ENCODE measurements at regions of chr18 and their contacts with region 1.

Region 1: DNA sequence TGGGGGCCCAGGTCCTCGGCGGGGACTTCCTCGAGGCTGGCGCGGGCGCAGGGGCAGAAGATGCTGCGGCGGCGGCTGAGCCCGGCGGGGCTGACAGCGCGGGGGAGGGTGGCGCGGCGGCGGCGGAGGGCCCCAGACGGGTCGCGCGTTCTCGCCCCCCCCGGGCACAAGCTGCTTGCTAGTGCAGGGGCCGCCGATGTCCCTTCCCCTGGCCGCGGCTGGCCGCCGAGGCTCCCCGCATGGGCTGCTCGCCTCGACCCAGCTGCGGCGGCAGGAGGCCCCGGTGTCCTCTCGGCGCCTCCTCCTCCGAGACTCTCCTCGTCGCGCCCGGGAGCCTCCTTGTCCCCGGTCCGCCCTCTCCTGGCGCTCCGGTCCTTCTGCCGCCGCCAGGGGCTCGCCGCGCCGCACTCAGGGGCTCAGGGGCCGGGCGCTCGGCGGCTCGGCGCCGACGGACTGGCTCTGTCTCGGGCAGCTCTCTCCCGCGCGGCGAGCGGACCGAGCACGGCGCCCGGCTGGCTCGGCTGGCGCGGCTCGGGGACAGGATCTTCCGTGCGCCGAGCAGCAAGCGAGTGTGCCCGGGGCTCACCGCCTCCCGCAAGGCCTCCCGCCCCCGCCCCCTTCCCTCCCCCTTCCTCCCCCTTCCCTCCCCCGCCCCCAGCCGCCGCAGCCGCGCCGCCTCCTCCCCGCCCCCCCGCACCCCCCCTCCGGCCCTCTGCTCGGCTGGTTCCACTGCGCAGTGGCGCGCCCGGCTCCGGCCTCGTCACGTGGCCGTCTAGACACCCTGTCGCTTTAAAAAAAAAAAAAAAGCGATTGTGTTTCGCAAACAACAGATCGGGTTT is 902 bp upstream of the SMAD7 start:
- DNase-seq: peak; percentile 59 to 79 (median 67)
- ATAC-seq: peak; percentile 69
- H3K4me3 ChIP-seq: peak overlapping the region; percentile 69
- H3K4me3 Mint-ChIP-seq: peak overlapping the region; percentile 84 to 97 (median 94)
- H3K27ac ChIP-seq: peak overlapping the region; percentile 76
- H3K27ac Mint-ChIP-seq: peak overlapping the region; percentile 87 to 99 (median 96)
- H3K4me1 ChIP-seq: peaks cover 26 to 38% of the 10 kb centered on the region in 2 donors
- H3K4me1 Mint-ChIP-seq: peaks cover 24 to 55% (median 44%) of the 10 kb centered on the region in 7 donors
- H3K27me3 ChIP-seq: no peaks in the 10 kb centered on the region
- H3K27me3 Mint-ChIP-seq: peaks cover 0 to 11% (median 0%) of the 10 kb centered on the region in 5 donors

Region 2: GRCh38 chr18:48777026-48777743 is 174.5 kb before region 1 on chr18:
- CTCF ChIA-PET with region 1: interaction called, 3 read pairs
- POLR2A ChIA-PET with region 1: no interaction called
- intact Hi-C with region 1: loop called (anchors 1 to 2 kb)
- DNase-seq: peak; percentile 40 to 78 (median 67)
- ATAC-seq: peak; percentile 86
- H3K4me3 ChIP-seq: no peak overlapping the region
- H3K4me3 Mint-ChIP-seq: no peak overlapping the region
- H3K27ac ChIP-seq: no peak overlapping the region
- H3K27ac Mint-ChIP-seq: peak overlapping the region in 1 of 9 donors; percentile 13
- H3K4me1 ChIP-seq: peaks cover 4 to 8% of the 10 kb centered on the region in 2 donors
- H3K4me1 Mint-ChIP-seq: peaks cover 0 to 10% (median 5%) of the 10 kb centered on the region in 7 donors
- H3K27me3 ChIP-seq: no peaks in the 10 kb centered on the region
- H3K27me3 Mint-ChIP-seq: peaks cover 0 to 5% (median 0%) of the 10 kb centered on the region in 5 donors

Region 3: DNA sequence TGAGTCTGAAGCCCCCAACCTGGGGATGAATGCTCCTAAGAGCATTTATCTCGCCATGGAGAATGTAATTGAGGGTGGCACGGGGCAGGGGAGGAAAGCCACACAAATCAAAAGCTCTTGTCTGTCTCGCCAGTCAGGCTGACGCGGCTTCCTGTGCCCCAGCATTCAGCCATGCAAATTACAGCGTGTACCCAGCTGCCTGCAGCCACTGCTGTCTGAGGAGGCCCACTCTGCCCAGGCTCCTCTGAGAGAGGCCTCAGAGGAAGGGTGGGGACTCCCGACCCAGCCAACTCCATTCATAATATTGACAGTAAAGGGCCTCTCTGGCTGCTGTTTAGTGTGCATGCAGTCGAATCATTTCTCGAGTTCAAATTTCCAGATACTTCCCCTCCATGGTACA is 22.9 kb before region 1 on chr18:
- CTCF ChIA-PET with region 1: no interaction called
- POLR2A ChIA-PET with region 1: interaction called, 9 read pairs
- intact Hi-C with region 1: loop called (anchors 1 to 2 kb)
- DNase-seq: peak; percentile 46 to 76 (median 64)
- ATAC-seq: peak; percentile 87
- H3K4me3 ChIP-seq: peak overlapping the region; percentile 12
- H3K4me3 Mint-ChIP-seq: peak overlapping the region; percentile 72 to 86 (median 79)
- H3K27ac ChIP-seq: no peak overlapping the region
- H3K27ac Mint-ChIP-seq: peak overlapping the region; percentile 50 to 98 (median 74)
- H3K4me1 ChIP-seq: peaks cover 62 to 73% of the 10 kb centered on the region in 2 donors
- H3K4me1 Mint-ChIP-seq: peaks cover 78 to 98% (median 96%) of the 10 kb centered on the region in 7 donors
- H3K27me3 ChIP-seq: no peaks in the 10 kb centered on the region
- H3K27me3 Mint-ChIP-seq: no peaks in the 10 kb centered on the region

Region 4: GRCh38 chr18:48962994-48963561 is 11.4 kb after region 1 on chr18:
- CTCF ChIA-PET with region 1: no interaction called
- POLR2A ChIA-PET with region 1: interaction called, 10 read pairs
- intact Hi-C with region 1: no loop called
- DNase-seq: no peak
- ATAC-seq: peak; percentile 73
- H3K4me3 ChIP-seq: no peak overlapping the region
- H3K4me3 Mint-ChIP-seq: no peak overlapping the region
- H3K27ac ChIP-seq: no peak overlapping the region
- H3K27ac Mint-ChIP-seq: peak overlapping the region in 1 of 9 donors; percentile 63
- H3K4me1 ChIP-seq: no peaks in the 10 kb centered on the region
- H3K4me1 Mint-ChIP-seq: peaks cover 0 to 15% (median 10%) of the 10 kb centered on the region in 7 donors
- H3K27me3 ChIP-seq: no peaks in the 10 kb centered on the region
- H3K27me3 Mint-ChIP-seq: peaks cover 0 to 50% (median 0%) of the 10 kb centered on the region in 5 donors

Region 5: GRCh38 chr18:49031511-49032188 is 80.0 kb after region 1 on chr18:
- CTCF ChIA-PET with region 1: no interaction called
- POLR2A ChIA-PET with region 1: no interaction called
- intact Hi-C with region 1: loop called in 1 of 2 experiments (anchors 2 kb)
- DNase-seq: peak in 8 of 9 donors; percentile 25 to 58 (median 35)
- ATAC-seq: peak; percentile 80
- H3K4me3 ChIP-seq: peak overlapping the region; percentile 24
- H3K4me3 Mint-ChIP-seq: peak overlapping the region; percentile 21 to 75 (median 58)
- H3K27ac ChIP-seq: no peak overlapping the region
- H3K27ac Mint-ChIP-seq: peak overlapping the region in 5 of 9 donors; percentile 14 to 82 (median 63)
- H3K4me1 ChIP-seq: peaks cover 0 to 9% of the 10 kb centered on the region in 2 donors
- H3K4me1 Mint-ChIP-seq: peaks cover 11 to 29% (median 17%) of the 10 kb centered on the region in 7 donors
- H3K27me3 ChIP-seq: no peaks in the 10 kb centered on the region
- H3K27me3 Mint-ChIP-seq: peaks cover 0 to 4% (median 0%) of the 10 kb centered on the region in 5 donors

Region 6: GRCh38 chr18:49486953-49487710 is 535.5 kb after region 1 on chr18 and contains the start of gene C18orf32:
- CTCF ChIA-PET with region 1: no interaction called
- POLR2A ChIA-PET with region 1: no interaction called
- intact Hi-C with region 1: loop called (anchors 2 to 5 kb)
- DNase-seq: peak; percentile 84 to 93 (median 92)
- ATAC-seq: peak; percentile 94
- H3K4me3 ChIP-seq: peak within 1 kb of the TSS; percentile 95
- H3K4me3 Mint-ChIP-seq: peak within 1 kb of the TSS; percentile 77 to 98 (median 94)
- H3K27ac ChIP-seq: peak within 1 kb of the TSS; percentile 95
- H3K27ac Mint-ChIP-seq: peak within 1 kb of the TSS; percentile 90 to 98 (median 96)
- H3K4me1 ChIP-seq: peaks cover 34 to 39% of the 10 kb centered on the region in 2 donors
- H3K4me1 Mint-ChIP-seq: peaks cover 40 to 83% (median 70%) of the 10 kb centered on the region in 7 donors
- H3K27me3 ChIP-seq: no peaks in the 10 kb centered on the region
- H3K27me3 Mint-ChIP-seq: no peaks in the 10 kb centered on the region
- total RNA-seq, gene C18orf32: 22.5 to 53.6 (median 31.5) TPM